GM12878 (cell line): ENCODE measurements at regions of chr22 and their contacts with region 1.

Region 1: DNA sequence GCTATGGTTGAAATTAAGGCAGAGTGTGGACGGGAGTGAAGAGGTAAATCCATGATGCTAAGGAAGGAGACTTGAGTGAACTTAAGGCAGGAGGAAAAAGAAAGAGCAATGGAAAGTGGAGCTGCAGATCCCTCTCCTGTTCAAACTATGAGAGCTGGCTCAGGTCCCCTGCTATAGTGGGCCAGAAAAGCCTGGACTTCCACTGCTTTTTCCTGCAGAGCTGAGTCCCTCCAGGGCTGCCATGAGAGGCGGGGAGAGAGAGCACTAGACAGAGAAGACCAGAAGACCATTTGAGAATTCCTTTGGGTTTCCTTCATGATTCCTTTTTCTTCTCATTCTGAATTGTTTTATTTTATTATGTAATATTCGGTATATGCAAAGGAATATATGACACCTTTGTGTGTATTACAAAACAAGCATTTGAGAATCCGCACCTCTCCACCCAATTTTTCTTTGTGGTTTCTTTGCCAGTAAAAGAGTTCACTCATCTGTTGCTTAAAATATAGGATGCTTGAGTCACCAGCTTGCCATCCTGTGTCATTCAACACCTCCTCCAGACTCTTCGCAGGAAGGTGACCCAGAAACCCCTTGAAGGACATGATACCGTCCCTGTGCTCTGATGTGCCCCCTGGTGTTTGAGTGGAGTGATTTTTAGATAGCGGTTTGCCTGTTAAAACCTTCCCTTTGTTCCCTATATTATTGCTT is 24.4 kb downstream of the SREBF2 start:
- DNase-seq: peak; percentile 46
- ATAC-seq: peak; percentile 60
- H3K4me3 ChIP-seq: no peak overlapping the region
- H3K27ac ChIP-seq: no peak overlapping the region
- H3K4me1 ChIP-seq: peaks cover 47% of the 10 kb centered on the region
- H3K27me3 ChIP-seq: no peaks in the 10 kb centered on the region
- CTCF ChIP-seq: peak; percentile 54 to 76 (median 71)
- EP300 ChIP-seq: no peak
- POLR2A ChIP-seq: no peak
- RAD21 ChIP-seq: peak; percentile 64

Region 2: GRCh38 chr22:41780746-41781505 is 76.4 kb before region 1 on chr22:
- CTCF ChIA-PET with region 1: interaction called, 8 read pairs
- POLR2A ChIA-PET with region 1: interaction called, 12 read pairs
- RAD21 ChIA-PET with region 1: interaction called, 5 read pairs
- SMC1A ChIA-PET with region 1: interaction called, 16 read pairs
- in situ Hi-C with region 1: no loop called
- intact Hi-C with region 1: no loop called
- DNase-seq: peak; percentile 90
- ATAC-seq: peak; percentile 97
- H3K4me3 ChIP-seq: peak overlapping the region; percentile 76
- H3K27ac ChIP-seq: peak overlapping the region; percentile 54
- H3K4me1 ChIP-seq: peaks cover 11% of the 10 kb centered on the region
- H3K27me3 ChIP-seq: no peaks in the 10 kb centered on the region
- CTCF ChIP-seq: no peak
- EP300 ChIP-seq: peak in 1 of 2 experiments; percentile 34; a peak in 1 of 4 replicates
- POLR2A ChIP-seq: peak; percentile 81
- RAD21 ChIP-seq: no peak

Region 3: DNA sequence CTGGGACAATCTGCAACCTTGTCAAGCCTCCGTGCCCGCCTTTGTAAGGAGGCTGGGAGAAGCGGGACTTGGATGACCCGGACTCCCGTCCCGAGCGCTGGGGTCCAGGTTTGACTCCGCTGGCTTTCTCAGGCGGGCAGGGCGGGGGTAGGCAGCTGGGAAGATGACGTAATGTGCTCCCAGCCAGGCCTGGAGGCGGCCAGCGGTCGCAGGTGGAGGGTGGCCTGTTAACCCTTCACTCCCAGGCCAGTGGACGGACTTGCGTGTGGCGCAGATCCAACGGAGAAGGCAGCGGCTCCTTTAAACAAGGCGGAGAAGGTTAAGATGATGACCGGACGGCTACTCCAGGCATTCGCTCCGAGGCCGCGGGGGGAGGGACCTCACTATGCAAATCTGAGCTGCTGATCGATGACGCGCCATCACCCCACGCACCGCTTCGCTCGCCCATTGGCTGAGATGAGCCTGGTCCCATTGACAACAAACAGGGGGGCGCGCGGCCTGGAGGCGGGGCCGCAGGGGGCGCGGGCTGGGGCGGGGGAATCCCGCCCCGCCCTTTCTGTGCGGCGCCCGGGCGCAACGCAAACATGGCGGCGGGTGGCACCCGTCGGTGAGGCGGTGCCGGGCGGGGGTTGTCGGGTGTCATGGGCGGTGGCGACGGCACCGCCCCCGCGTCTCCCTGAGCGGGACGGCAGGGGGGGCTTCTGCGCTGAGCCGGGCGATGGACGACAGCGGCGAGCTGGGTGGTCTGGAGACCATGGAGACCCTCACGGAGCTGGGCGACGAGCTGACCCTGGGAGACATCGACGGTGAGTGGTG is 24.5 kb before region 1 on chr22 and contains the start of gene SREBF2:
- CTCF ChIA-PET with region 1: interaction called, 51 read pairs
- POLR2A ChIA-PET with region 1: interaction called, 60 read pairs
- RAD21 ChIA-PET with region 1: interaction called, 50 read pairs
- SMC1A ChIA-PET with region 1: interaction called, 27 read pairs
- in situ Hi-C with region 1: no loop called
- intact Hi-C with region 1: loop called (anchors 1 kb)
- DNase-seq: peak; percentile 99
- ATAC-seq: peak; percentile 92
- H3K4me3 ChIP-seq: peak within 1 kb of the TSS; percentile 92
- H3K27ac ChIP-seq: peak within 1 kb of the TSS; percentile 95
- H3K4me1 ChIP-seq: peaks cover 12% of the 10 kb centered on the region
- H3K27me3 ChIP-seq: no peaks in the 10 kb centered on the region
- CTCF ChIP-seq: 0 out of 6 replicates have a peak, but pooled peaks of 1 of the 3 experiments have one; percentile 1
- EP300 ChIP-seq: peak; percentile 64 to 75
- POLR2A ChIP-seq: peak; percentile 94
- RAD21 ChIP-seq: no peak
- polyA plus RNA-seq, gene SREBF2: 2.4 to 3.6 TPM

Region 4: GRCh38 chr22:41919357-41920224 is 62.3 kb after region 1 on chr22:
- CTCF ChIA-PET with region 1: interaction called, 6 read pairs
- POLR2A ChIA-PET with region 1: interaction called, 58 read pairs
- RAD21 ChIA-PET with region 1: interaction called, 57 read pairs
- SMC1A ChIA-PET with region 1: interaction called, 30 read pairs
- in situ Hi-C with region 1: no loop called
- intact Hi-C with region 1: no loop called
- DNase-seq: peak; percentile 71
- ATAC-seq: peak; percentile 61
- H3K4me3 ChIP-seq: peak overlapping the region; percentile 66
- H3K27ac ChIP-seq: peak overlapping the region; percentile 86
- H3K4me1 ChIP-seq: peaks cover 72% of the 10 kb centered on the region
- H3K27me3 ChIP-seq: peaks cover 0 to 3% of the 10 kb centered on the region in 2 experiments; a peak in 2 of 4 replicates
- CTCF ChIP-seq: no peak
- EP300 ChIP-seq: no peak
- POLR2A ChIP-seq: peak; percentile 85
- RAD21 ChIP-seq: no peak

Region 5: DNA sequence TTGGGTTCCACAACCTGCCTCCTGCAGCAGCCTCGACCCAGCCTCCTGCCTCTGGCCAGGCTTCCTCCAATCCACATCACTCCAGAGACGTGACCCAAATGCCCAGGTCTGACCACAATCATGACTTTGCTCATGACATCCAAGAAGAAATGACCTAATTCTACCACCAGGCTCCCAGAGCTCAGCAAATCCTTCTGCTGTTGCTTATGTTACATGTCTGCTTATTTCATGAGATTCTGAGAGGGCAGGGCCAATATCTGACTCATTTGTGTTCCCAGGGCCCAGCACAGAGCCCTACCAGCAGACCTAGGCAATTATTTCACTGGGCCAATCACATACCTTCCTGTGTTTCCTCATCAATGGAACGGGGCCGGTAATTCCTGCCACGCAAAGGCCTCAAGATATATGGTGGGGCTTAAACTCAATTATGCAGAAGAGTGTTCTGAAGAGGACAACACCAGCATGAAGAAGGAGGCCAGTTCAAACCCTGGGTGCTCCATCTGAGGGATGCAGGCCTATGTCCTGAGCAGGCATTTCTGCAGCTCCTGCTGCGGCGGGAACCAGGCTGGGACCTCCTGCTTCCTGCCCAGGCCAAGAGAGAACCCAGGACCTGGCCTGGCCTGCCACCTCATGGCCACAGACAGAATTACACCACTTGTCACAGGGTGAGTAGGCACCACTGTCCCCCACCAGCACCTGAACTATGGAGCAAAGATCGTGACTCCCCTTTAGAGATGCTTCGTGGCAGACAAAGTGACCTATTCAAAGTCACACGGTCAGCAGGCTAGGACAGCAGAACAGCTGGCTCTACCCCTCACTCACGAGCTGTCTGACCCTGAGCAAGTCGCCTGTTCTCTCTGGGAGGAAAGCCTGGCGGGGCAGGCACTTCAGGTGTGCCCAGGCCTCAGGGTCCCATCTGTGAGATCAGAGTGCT is 83.8 kb after region 1 on chr22:
- CTCF ChIA-PET with region 1: interaction called, 41 read pairs
- POLR2A ChIA-PET with region 1: interaction called, 61 read pairs
- RAD21 ChIA-PET with region 1: interaction called, 101 read pairs
- SMC1A ChIA-PET with region 1: interaction called, 41 read pairs
- in situ Hi-C with region 1: no loop called
- intact Hi-C with region 1: loop called (anchors 2 kb)
- DNase-seq: no peak
- ATAC-seq: peak; percentile 60
- H3K4me3 ChIP-seq: 0 out of 2 replicates have a peak overlapping the region, but pooled peaks have one; percentile 4
- H3K27ac ChIP-seq: peak overlapping the region; percentile 94
- H3K4me1 ChIP-seq: peaks cover 66% of the 10 kb centered on the region
- H3K27me3 ChIP-seq: no peaks in the 10 kb centered on the region
- CTCF ChIP-seq: peak; percentile 88 to 97 (median 95)
- EP300 ChIP-seq: peak in 1 of 2 experiments; percentile 11; a peak in 1 of 4 replicates
- POLR2A ChIP-seq: peak; percentile 33; the same call in 1 of the 2 replicates
- RAD21 ChIP-seq: peak; percentile 92

Region 6: DNA sequence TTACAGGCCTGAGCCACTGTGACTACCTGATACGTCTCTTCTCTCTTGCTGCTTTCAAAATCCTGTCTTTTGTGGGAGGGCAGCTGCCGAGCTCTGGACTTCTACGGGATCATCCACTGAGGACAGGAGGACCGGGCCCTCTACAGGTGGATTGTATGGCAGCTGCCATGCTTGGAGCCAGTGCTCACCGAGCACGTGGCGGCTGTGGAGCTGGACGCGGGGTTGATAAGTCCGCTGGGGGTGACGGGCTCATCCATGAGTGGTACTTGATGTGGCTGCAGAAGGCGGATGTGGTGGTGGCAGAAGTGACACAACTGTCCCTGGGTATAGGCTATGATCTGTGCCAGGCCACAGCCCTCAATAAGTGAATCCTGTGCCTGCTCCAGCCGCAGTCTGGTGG is 275.1 kb after region 1 on chr22:
- CTCF ChIA-PET with region 1: no interaction called
- POLR2A ChIA-PET with region 1: interaction called, 10 read pairs
- RAD21 ChIA-PET with region 1: no interaction called
- SMC1A ChIA-PET with region 1: no interaction called
- in situ Hi-C with region 1: no loop called
- intact Hi-C with region 1: no loop called
- DNase-seq: no peak
- ATAC-seq: no peak
- H3K4me3 ChIP-seq: no peak overlapping the region
- H3K27ac ChIP-seq: no peak overlapping the region
- H3K4me1 ChIP-seq: no peaks in the 10 kb centered on the region
- H3K27me3 ChIP-seq: no peaks in the 10 kb centered on the region
- CTCF ChIP-seq: no peak
- EP300 ChIP-seq: no peak
- POLR2A ChIP-seq: no peak
- RAD21 ChIP-seq: no peak